RWPE1 (cell line): ENCODE measurements at regions of chr12 and their contacts with region 1.

Region 1: DNA sequence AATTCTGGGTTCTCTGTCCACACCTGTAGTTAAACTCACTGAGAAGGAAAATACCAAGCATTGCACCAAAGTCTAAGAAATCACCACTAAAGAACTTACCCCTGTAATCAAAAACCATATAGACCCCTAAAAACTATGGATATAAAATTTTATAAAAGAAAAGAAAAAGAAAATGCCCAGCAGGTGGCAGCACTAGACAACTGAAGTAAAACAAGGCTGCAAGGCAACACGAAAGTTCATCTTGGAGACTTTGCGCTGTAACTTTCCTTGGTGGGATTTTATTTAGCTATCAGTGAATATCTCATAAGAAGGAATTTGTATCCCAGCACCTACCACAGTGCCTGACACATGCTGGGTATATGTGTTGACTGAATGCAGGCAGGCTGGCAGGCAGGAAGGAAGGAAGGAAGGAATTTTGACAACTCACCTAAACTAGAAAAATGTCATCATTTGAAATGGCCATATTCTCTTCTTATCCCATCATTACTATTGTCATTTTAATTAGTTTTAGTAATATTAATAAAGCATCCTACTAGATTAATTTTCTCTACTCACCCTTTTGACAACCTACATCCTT is 68.2 kb upstream of the ETV6 start:
- DNase-seq: peak; percentile 25
- H3K27ac ChIP-seq: peak overlapping the region; percentile 84
- CTCF ChIP-seq: no peak; the same call in 1 of the 2 replicates

Region 2: DNA sequence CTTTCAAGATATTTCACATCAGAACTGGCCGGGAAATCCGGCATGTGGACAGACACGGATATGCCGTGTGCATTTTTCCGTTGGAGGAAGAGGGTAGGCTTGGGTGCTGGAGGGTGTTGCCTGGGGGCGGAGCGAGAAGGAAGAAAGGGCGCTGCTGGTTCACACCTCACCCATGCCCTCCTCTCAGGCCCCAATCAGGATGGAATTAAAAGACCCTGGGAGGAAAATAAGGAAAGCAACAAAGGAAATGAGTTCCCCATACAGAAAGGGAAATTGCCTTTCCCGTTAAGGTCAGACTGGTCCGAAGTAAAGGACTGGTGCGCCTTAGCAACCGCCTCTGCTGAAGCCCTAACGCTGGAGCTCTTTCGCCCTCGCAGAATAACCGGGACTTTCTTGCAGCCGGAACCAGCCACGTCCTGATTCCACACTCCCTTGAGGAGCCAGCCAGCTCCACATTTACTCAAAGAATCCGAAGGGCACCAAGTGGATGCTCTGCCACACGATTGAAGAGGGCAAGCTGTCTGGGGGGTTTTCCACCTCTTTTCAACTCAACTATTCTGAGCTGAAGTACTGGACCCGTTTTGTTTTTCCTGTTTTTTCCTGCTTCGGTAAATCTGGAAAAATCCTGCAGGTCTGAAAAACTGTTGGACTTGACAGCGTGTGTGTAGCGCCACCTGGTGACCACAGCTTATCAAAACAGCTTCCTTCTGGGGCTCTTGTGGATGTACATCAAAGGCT is 451.8 kb after region 1 on chr12:
- CTCF ChIA-PET with region 1: interaction called, 45 read pairs
- POLR2A ChIA-PET with region 1: no interaction called
- DNase-seq: peak; percentile 78
- H3K27ac ChIP-seq: no peak overlapping the region
- CTCF ChIP-seq: peak; percentile 65

Region 3: DNA sequence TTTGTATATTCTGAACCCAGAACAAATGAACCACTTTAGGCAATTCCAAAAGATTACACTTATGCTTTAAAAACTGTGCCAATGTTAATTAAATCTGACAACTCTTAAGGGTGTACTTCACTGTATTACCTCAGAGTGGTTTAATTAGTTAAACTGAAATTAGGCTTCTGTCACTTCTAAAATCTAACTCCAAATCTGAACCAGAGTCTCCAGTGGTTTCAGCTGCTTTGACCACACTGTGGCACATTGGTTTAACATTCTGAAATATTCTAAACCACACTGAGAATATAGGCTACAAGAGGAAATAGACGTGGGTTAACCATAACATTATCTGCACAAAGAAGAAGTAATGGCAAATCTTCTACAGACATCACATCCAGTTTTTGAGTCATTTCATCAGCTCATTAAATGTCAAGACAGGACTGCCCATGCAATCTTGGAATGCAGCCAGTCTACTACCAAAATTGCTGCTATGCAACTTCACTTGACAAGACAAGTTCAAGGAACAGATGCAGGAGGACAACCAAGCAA is 590.8 kb after region 1 on chr12:
- CTCF ChIA-PET with region 1: no interaction called
- POLR2A ChIA-PET with region 1: no interaction called
- DNase-seq: peak; percentile 15
- H3K27ac ChIP-seq: no peak overlapping the region
- CTCF ChIP-seq: no peak